Right ventricle myocardium inferior (tissue), 1 donor: ENCODE measurements at regions of chr1 and their contacts with region 1.

Region 1: GRCh38 chr1:112337028-112337531 is 58.9 kb upstream of the CTTNBP2NL start:
- DNase-seq: peak; percentile 72
- ATAC-seq: peak; percentile 88

Region 2: DNA sequence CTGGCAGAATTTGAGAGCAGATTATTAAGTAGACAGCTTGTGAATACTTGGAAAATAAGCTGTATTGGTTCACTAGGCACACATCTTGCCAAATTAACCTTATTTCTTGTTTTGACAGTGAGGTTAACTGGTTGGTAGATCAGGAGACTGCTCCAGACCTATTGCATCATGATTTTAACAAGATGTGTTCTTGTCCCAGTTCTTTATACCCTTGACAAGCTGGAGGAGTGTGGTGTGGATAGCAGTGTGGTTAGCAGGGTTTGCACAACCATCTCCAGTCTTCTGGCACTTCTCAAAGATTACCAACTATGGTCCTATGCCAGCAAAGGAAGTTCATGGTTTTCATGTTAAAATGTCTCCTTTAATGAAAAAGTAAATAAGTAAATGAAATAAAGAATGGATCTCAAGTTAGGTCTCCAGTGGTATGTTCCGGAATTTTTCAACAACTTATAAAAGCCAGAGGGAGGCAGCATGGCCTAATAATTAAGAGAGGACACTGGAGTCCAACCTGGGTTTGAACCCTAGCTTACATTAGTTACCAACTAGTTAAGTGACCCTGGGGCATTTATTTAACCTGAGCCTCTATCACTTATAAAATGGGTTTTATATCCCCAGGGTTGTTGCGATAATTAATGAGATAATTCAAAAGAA is 547.3 kb before region 1 on chr1:
- intact Hi-C with region 1: loop called (anchors 5 kb)
- DNase-seq: no peak
- ATAC-seq: peak; percentile 85